GM12878 (cell line): ENCODE measurements at regions of chr9 and their contacts with region 1.

Region 1: DNA sequence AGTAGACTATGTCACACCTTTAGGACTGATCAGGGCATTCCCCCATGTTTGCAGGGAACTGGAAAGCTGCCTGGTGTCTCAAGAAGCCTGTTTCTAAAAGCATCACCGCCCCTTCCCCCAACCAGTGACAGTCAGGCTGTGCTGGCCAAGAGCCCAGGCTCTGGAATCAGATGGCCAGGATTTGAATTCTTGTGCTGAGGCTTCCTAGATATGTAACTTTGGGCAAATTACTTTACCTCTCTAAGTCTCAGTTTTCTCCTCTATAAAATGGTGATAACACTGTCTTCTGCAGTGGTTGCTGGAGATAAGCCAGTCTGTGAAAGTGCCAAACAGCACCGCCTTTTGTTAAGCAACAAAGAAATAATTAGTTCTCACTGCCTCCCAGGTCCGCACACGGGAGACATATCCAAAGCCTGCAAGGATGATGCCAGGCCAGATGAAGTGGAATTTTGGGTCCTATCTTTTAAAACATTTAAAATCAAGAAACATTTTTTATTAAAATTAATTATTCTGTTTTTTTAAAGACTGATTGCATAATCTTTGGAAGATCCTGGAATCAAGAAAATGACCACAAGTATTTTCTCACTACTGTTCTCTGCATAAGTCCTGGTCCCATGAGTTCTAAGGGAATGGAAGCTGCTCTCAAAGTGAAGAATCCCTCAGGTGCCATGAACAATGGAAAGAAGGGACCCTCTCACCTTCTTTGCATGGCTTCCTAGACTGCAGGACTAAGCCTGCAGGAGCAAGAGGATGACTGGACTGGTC is 13.9 kb downstream of the SLC31A2 start:
- DNase-seq: no peak
- ATAC-seq: no peak
- H3K4me3 ChIP-seq: no peak overlapping the region
- H3K27ac ChIP-seq: no peak overlapping the region
- H3K4me1 ChIP-seq: no peaks in the 10 kb centered on the region
- H3K27me3 ChIP-seq: no peaks in the 10 kb centered on the region
- CTCF ChIP-seq: no peak
- EP300 ChIP-seq: no peak
- POLR2A ChIP-seq: no peak
- RAD21 ChIP-seq: no peak

Region 2: DNA sequence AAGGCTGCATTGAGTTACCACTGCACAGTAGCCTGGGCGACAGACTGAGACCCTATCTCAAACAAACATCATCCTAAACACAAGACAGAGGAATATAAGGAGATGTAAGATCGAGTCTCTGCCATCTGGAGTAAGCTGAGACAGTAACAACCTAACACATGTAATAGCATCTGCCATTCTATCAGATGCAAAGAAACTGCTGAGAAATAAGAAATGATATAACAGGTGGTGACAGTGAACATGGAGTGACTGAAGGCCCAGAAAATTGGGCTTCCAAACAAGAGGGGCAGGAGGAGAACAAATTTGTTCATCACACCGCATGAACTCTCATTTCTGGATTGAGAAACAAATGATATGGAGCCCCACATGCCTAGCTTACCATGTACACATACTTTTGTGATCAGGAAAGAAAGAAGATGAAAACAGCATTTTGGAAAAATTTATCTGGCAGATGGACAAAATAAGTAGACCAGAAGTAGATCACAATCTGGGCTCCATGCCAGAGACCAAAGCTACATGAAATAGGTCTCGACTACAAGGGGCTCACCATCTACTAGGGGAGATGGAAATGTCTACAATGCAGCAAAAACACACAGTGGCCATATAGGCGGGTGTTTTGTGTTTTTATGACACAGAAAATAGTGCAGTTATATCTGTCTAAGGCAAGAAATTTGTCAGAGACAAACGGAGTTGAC is 1726.0 kb before region 1 on chr9:
- CTCF ChIA-PET with region 1: no interaction called
- POLR2A ChIA-PET with region 1: no interaction called
- RAD21 ChIA-PET with region 1: no interaction called
- SMC1A ChIA-PET with region 1: no interaction called
- in situ Hi-C with region 1: no loop called
- intact Hi-C with region 1: loop called (anchors 10 kb)
- DNase-seq: no peak
- ATAC-seq: no peak
- H3K4me3 ChIP-seq: no peak overlapping the region
- H3K27ac ChIP-seq: no peak overlapping the region
- H3K4me1 ChIP-seq: no peaks in the 10 kb centered on the region
- H3K27me3 ChIP-seq: no peaks in the 10 kb centered on the region
- CTCF ChIP-seq: no peak
- EP300 ChIP-seq: no peak
- POLR2A ChIP-seq: no peak
- RAD21 ChIP-seq: no peak

Region 3: DNA sequence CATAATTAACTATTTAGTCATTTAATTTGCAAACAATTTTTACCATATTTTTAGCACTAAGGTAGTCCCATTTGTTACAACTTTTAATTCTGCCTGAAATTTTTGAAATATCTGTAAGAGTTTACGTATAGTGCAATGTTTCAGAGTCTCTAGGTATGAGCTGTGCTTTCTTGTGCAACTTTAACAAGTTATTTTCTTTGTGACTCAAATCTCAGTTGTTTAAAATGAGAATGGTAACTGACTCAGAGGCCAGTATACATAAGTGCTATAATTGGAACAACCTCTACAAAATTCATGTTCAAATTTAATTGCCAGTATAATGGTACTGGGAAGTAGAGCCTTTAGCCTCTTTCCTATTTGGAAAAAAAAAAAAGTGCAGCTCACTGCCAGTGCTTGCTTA is 138.5 kb before region 1 on chr9:
- CTCF ChIA-PET with region 1: no interaction called
- POLR2A ChIA-PET with region 1: no interaction called
- RAD21 ChIA-PET with region 1: no interaction called
- SMC1A ChIA-PET with region 1: no interaction called
- in situ Hi-C with region 1: no loop called
- intact Hi-C with region 1: no loop called
- DNase-seq: no peak
- ATAC-seq: no peak
- H3K4me3 ChIP-seq: no peak overlapping the region
- H3K27ac ChIP-seq: no peak overlapping the region
- H3K4me1 ChIP-seq: no peaks in the 10 kb centered on the region
- H3K27me3 ChIP-seq: no peaks in the 10 kb centered on the region
- CTCF ChIP-seq: no peak
- EP300 ChIP-seq: no peak
- POLR2A ChIP-seq: no peak
- RAD21 ChIP-seq: no peak